Activated CD4-positive, alpha-beta T cell treated with anti-CD3 and anti-CD28 coated beads for 36 hours (primary cell): ENCODE measurements at regions of chr1 and their contacts with region 1.

Region 1: DNA sequence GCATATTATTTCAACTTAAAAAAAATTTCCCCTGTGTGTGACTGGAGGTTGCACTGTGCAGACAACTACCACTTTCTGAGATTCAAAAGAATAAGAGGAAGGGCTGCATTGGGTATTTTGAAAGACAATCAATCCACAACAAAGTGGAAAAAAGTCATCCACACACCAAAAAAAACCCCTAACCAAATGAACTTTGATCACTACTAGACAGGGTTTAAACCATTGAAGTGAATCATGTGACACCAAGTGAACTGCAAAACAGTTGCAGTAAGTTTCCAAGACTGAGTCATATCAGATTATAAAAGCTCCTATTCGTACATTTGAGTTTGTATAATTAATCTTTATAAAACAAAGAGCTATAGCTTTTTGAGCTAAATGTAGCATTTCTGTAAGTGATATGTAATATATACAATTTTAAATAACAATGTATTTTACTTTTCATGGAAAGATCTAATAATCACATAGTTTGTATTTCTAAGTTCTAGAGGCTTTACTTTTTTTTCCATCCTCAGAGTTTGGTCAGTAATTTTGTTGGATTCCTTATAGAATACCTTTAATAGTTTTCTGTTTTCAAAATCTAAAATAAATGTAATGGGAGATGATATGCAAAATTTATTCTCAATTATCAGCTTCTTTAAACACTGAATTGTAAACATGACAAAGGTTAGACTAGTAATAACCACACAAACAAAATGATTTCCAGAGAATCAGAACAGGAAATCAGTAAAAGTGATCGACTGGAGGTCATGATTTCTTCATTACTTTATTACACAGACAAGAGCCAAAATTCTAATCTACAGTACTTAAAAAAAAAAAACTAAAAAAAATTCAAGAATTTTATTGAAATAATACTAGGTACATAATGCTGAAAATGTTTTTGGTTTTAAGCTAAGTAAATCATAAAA is 50.5 kb upstream of the GFI1 start:
- DNase-seq: no peak
- ATAC-seq: peak; percentile 53
- H3K4me3 Mint-ChIP-seq: peak overlapping the region; percentile 70
- H3K27ac Mint-ChIP-seq: peak overlapping the region; percentile 98
- H3K4me1 Mint-ChIP-seq: peaks cover 89% of the 10 kb centered on the region
- H3K27me3 Mint-ChIP-seq: no peaks in the 10 kb centered on the region

Region 2: DNA sequence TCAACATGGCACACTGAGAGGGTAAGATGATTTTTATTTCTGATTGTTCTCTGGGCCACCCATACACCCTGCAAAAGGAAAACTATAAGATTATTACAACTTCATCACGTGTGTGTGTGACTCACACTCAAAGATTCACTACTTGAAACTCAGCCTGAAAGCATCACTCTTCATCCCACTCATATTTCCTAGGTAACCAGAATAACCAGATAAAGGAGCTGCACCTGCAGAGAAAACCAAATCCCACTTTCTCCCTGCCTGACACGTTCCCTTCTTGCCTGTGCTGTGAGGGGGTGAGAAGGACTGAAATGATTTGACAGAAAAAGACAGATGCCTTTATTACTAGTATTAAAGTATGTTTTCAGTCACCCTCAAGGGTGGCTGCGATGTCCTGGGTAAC is 782.9 kb before region 1 on chr1:
- CTCF ChIA-PET with region 1: no interaction called
- POLR2A ChIA-PET with region 1: no interaction called
- intact Hi-C with region 1: loop called (anchors 1 kb)
- DNase-seq: peak; percentile 75
- ATAC-seq: peak; percentile 87
- H3K4me3 Mint-ChIP-seq: peak overlapping the region; percentile 21
- H3K27ac Mint-ChIP-seq: peak overlapping the region; percentile 82
- H3K4me1 Mint-ChIP-seq: peaks cover 43% of the 10 kb centered on the region
- H3K27me3 Mint-ChIP-seq: peaks cover 7% of the 10 kb centered on the region

Region 3: GRCh38 chr1:92310185-92310597 is 227.0 kb before region 1 on chr1:
- CTCF ChIA-PET with region 1: interaction called, 6 read pairs
- POLR2A ChIA-PET with region 1: interaction called, 3 read pairs
- intact Hi-C with region 1: loop called (anchors 2 kb)
- DNase-seq: no peak
- ATAC-seq: peak; percentile 34
- H3K4me3 Mint-ChIP-seq: no peak overlapping the region
- H3K27ac Mint-ChIP-seq: no peak overlapping the region
- H3K4me1 Mint-ChIP-seq: peaks cover 33% of the 10 kb centered on the region
- H3K27me3 Mint-ChIP-seq: no peaks in the 10 kb centered on the region

Region 4: GRCh38 chr1:92476071-92476631 is 61.1 kb before region 1 on chr1:
- CTCF ChIA-PET with region 1: interaction called, 6 read pairs
- POLR2A ChIA-PET with region 1: interaction called, 20 read pairs
- intact Hi-C with region 1: loop called (anchors 1 to 2 kb)
- DNase-seq: peak; percentile 84
- ATAC-seq: peak; percentile 57
- H3K4me3 Mint-ChIP-seq: peak overlapping the region; percentile 37
- H3K27ac Mint-ChIP-seq: peak overlapping the region; percentile 92
- H3K4me1 Mint-ChIP-seq: peaks cover 85% of the 10 kb centered on the region
- H3K27me3 Mint-ChIP-seq: no peaks in the 10 kb centered on the region

Region 5: GRCh38 chr1:92556350-92556749 is 19.1 kb after region 1 on chr1:
- CTCF ChIA-PET with region 1: interaction called, 8 read pairs
- POLR2A ChIA-PET with region 1: interaction called, 6 read pairs
- intact Hi-C with region 1: loop called in 1 of 2 experiments (anchors 2 kb)
- DNase-seq: no peak
- ATAC-seq: peak; percentile 64
- H3K4me3 Mint-ChIP-seq: no peak overlapping the region
- H3K27ac Mint-ChIP-seq: peak overlapping the region; percentile 58
- H3K4me1 Mint-ChIP-seq: peaks cover 44% of the 10 kb centered on the region
- H3K27me3 Mint-ChIP-seq: no peaks in the 10 kb centered on the region

Region 6: GRCh38 chr1:92679980-92680379 is 142.7 kb after region 1 on chr1:
- CTCF ChIA-PET with region 1: no interaction called
- POLR2A ChIA-PET with region 1: no interaction called
- intact Hi-C with region 1: no loop called
- DNase-seq: no peak
- ATAC-seq: no peak
- H3K4me3 Mint-ChIP-seq: no peak overlapping the region
- H3K27ac Mint-ChIP-seq: no peak overlapping the region
- H3K4me1 Mint-ChIP-seq: no peaks in the 10 kb centered on the region
- H3K27me3 Mint-ChIP-seq: no peaks in the 10 kb centered on the region

Region 7: GRCh38 chr1:92960395-92961130 is 423.3 kb after region 1 on chr1:
- CTCF ChIA-PET with region 1: no interaction called
- POLR2A ChIA-PET with region 1: no interaction called
- intact Hi-C with region 1: loop called in 1 of 2 experiments (anchors 5 kb)
- DNase-seq: peak; percentile 78
- ATAC-seq: peak; percentile 62
- H3K4me3 Mint-ChIP-seq: peak overlapping the region; percentile 94
- H3K27ac Mint-ChIP-seq: peak overlapping the region; percentile 95
- H3K4me1 Mint-ChIP-seq: peaks cover 36% of the 10 kb centered on the region
- H3K27me3 Mint-ChIP-seq: no peaks in the 10 kb centered on the region